T-cell (primary cell): ENCODE measurements at regions of chr2 and their contacts with region 1.

Region 1: DNA sequence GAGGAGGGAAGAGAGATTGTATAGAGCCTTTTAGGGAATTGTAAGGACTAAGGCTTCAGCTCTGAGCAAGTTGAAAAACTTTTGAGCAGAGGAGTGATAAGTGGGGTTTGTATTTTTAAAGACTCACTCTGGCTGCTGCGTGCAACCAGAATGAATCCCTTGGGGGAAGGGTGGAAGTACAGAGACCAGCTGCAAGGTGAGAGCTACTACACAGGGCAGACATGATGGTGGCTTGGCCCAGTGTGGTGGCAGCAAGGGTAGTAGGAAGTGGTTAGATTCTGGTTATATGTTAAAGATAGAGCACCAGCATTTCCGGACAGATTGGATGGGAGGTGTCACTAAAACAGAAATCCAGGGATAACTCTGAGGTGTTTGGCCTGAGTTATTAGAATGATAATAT is 10.1 kb upstream of the SESTD1 start:
- DNase-seq: no peak
- ATAC-seq: no peak
- H3K4me3 ChIP-seq: no peak overlapping the region
- H3K4me3 Mint-ChIP-seq: no peak overlapping the region
- H3K27ac ChIP-seq: no peak overlapping the region
- H3K27ac Mint-ChIP-seq: no peak overlapping the region
- H3K4me1 ChIP-seq: no peaks in the 10 kb centered on the region
- H3K4me1 Mint-ChIP-seq: peaks cover 0 to 6% (median 0%) of the 10 kb centered on the region in 3 donors
- H3K27me3 ChIP-seq: peaks cover 0 to 2% of the 10 kb centered on the region in 2 experiments
- H3K27me3 Mint-ChIP-seq: peaks cover 7 to 15% of the 10 kb centered on the region in 2 donors

Region 2: GRCh38 chr2:178084273-178084672 is 1190.5 kb before region 1 on chr2:
- CTCF ChIA-PET with region 1: no interaction called
- POLR2A ChIA-PET with region 1: interaction called in 1 of 2 experiments, 11 read pairs
- DNase-seq: no peak
- ATAC-seq: no peak
- H3K4me3 ChIP-seq: no peak overlapping the region
- H3K4me3 Mint-ChIP-seq: no peak overlapping the region
- H3K27ac ChIP-seq: no peak overlapping the region
- H3K27ac Mint-ChIP-seq: no peak overlapping the region
- H3K4me1 ChIP-seq: no peaks in the 10 kb centered on the region
- H3K4me1 Mint-ChIP-seq: no peaks in the 10 kb centered on the region
- H3K27me3 ChIP-seq: no peaks in the 10 kb centered on the region
- H3K27me3 Mint-ChIP-seq: peaks cover 7% of the 10 kb centered on the region in 2 donors

Region 3: GRCh38 chr2:179181002-179181401 is 93.7 kb before region 1 on chr2:
- CTCF ChIA-PET with region 1: no interaction called
- POLR2A ChIA-PET with region 1: no interaction called
- DNase-seq: no peak
- ATAC-seq: no peak
- H3K4me3 ChIP-seq: no peak overlapping the region
- H3K4me3 Mint-ChIP-seq: no peak overlapping the region
- H3K27ac ChIP-seq: no peak overlapping the region
- H3K27ac Mint-ChIP-seq: no peak overlapping the region
- H3K4me1 ChIP-seq: no peaks in the 10 kb centered on the region
- H3K4me1 Mint-ChIP-seq: no peaks in the 10 kb centered on the region
- H3K27me3 ChIP-seq: no peaks in the 10 kb centered on the region
- H3K27me3 Mint-ChIP-seq: no peaks in the 10 kb centered on the region